ENCODE measurements at regions of chr7 and their contacts with region 1.

Region 1: DNA sequence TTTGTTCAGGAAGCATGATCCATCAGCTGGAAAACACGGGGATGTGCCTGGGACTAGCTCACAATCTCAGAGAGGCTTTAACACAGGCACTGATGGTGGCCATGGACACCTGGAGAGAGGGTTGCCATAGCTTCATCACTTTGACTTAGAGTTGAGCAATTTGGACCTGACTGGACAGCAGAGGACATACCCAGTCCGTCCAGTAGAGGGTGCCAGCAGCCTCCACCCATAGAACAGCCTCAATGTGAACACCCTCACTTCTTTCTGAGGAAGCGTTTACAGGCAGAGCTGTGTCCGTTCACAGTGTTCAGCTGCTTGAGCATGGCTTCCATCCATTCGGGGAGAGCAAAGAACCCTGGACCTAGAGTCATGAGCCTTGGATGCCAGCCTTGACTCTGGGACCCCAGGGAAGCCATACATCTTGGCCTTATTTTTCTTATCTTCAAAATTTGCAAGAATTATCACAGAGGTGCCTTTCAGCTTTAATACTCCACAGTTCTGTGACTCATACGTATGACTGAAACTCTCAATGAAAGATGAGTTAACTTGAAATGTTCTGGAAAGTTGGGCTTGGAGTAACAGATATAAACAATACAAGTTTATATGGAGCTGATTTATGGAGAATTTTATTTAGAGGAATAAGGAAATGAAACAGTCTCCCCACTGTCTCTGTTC is 302.9 kb upstream of the PODXL start:
- DNase-seq: peak; percentile 62
- H3K4me3 Mint-ChIP-seq: no peak overlapping the region
- H3K27ac Mint-ChIP-seq: no peak overlapping the region
- H3K4me1 Mint-ChIP-seq: no peaks in the 10 kb centered on the region
- H3K27me3 Mint-ChIP-seq: peaks cover 5% of the 10 kb centered on the region

Region 2: GRCh38 chr7:132049462-132050304 is 190.4 kb after region 1 on chr7:
- CTCF ChIA-PET with region 1: interaction called, 12 read pairs
- intact Hi-C with region 1: loop called (anchors 1 kb)
- DNase-seq: peak; percentile 57
- H3K4me3 Mint-ChIP-seq: no peak overlapping the region
- H3K27ac Mint-ChIP-seq: no peak overlapping the region
- H3K4me1 Mint-ChIP-seq: no peaks in the 10 kb centered on the region
- H3K27me3 Mint-ChIP-seq: peaks cover 14% of the 10 kb centered on the region

Measured in activated naive CD4-positive, alpha-beta T cell treated with anti-CD3 and anti-CD28 coated beads for 36 hours (primary cell).